ENCODE measurements at regions of chr1 and their contacts with region 1.

Region 1: DNA sequence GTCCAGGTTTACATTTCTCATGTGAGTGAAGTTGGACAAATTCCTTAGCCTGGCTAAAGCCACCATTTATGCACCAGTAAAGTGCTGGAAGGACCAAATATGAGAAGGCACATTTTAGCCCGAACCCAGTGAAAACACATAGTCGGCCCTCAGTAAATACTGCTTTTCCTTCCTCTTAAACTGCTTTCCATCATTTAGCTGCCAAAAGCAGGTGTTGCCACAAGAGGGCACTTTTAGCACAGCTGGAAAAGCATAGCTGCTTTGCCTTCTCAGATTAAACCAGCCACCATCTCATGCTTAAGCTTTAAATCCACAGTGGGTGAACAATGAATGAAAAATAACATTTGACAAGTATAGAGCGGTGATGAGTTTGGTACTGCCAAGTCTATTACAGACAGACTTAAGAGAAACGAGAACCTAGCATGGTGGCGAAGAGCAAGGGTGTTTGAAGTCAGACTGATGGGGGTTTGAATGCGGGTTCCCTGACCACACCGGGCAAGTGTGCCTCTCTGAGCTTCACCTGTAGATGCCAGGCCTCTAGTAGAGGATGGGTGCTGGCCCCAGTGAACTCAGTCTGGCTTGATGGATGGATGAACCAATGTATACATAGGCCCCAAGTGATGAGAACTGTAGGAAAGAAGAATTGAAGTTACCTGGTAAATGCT is 57.8 kb downstream of the SLC35D1 start:
- DNase-seq: peak; percentile 19 to 58
- H3K4me3 ChIP-seq: no peak overlapping the region
- H3K27ac ChIP-seq: no peak overlapping the region
- H3K4me1 ChIP-seq: no peaks in the 10 kb centered on the region
- H3K27me3 ChIP-seq: no peaks in the 10 kb centered on the region
- CTCF ChIP-seq: peak in 2 of 3 experiments; percentile 83 to 86; a peak in 3 of 4 replicates
- EP300 ChIP-seq: no peak
- POLR2A ChIP-seq: no peak
- RAD21 ChIP-seq: peak; percentile 96 to 97

Region 2: GRCh38 chr1:66764994-66765578 is 231.1 kb before region 1 on chr1:
- CTCF ChIA-PET with region 1: interaction called, 16 read pairs
- POLR2A ChIA-PET with region 1: no interaction called
- DNase-seq: peak in 1 of 2 experiments; percentile 49
- H3K4me3 ChIP-seq: no peak overlapping the region
- H3K27ac ChIP-seq: no peak overlapping the region
- H3K4me1 ChIP-seq: no peaks in the 10 kb centered on the region
- H3K27me3 ChIP-seq: no peaks in the 10 kb centered on the region
- CTCF ChIP-seq: peak in 1 of 3 experiments; percentile 63; a peak in 2 of 4 replicates
- EP300 ChIP-seq: no peak
- POLR2A ChIP-seq: no peak
- RAD21 ChIP-seq: peak; percentile 75 to 79

Region 3: GRCh38 chr1:66788231-66788939 is 207.8 kb before region 1 on chr1:
- CTCF ChIA-PET with region 1: no interaction called
- POLR2A ChIA-PET with region 1: no interaction called
- DNase-seq: no peak
- H3K4me3 ChIP-seq: no peak overlapping the region
- H3K27ac ChIP-seq: no peak overlapping the region
- H3K4me1 ChIP-seq: no peaks in the 10 kb centered on the region
- H3K27me3 ChIP-seq: no peaks in the 10 kb centered on the region
- CTCF ChIP-seq: no peak
- EP300 ChIP-seq: no peak
- POLR2A ChIP-seq: no peak
- RAD21 ChIP-seq: no peak

Region 4: DNA sequence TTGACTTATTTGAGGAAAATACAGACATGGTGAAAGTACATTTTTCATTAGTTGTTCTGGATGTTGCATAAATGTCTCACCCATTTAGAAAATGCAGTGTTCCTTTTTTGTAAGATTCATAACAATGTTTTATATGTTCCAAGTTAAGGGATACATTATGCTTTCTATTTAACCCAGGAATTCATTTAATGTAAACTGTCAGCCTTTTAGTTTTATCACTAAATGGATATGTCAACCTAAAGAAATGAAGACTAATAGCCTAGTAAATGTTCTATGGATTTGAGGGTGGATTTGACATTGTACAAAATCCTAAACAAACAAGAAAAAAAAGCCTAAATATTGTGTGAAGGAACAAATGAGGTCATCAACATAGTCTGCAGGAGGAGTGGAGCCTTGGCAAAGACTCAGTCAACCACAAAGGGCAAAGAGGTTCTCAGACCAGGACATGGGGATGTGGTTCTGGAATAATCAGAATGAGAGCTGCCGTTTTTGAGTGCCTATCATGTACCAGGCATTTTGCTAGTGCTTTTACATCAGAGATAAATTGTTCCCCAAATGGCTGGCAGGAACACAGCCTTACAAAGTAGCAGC is 186.3 kb before region 1 on chr1:
- CTCF ChIA-PET with region 1: no interaction called
- POLR2A ChIA-PET with region 1: no interaction called
- DNase-seq: no peak
- H3K4me3 ChIP-seq: no peak overlapping the region
- H3K27ac ChIP-seq: no peak overlapping the region
- H3K4me1 ChIP-seq: no peaks in the 10 kb centered on the region
- H3K27me3 ChIP-seq: no peaks in the 10 kb centered on the region
- CTCF ChIP-seq: no peak
- EP300 ChIP-seq: no peak
- POLR2A ChIP-seq: no peak
- RAD21 ChIP-seq: no peak

Region 5: DNA sequence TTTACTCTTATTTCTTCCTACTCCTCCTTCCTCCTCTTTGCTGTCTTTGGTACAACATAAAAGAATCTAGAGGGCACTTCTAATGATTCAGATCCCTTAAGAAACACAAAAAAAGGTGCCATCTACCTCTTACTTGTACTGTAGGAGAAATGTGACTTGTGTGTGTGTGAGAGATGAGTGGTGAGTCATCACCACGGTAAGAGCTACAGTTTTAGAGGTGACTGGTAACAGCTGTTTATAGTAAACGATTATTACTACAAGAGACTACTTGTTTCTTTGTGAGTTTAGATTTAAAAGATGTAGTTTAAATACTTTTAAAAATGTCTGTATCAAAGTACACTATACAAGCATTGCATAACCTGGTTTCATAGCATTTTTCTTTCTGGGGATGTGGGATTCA is 17.4 kb after region 1 on chr1:
- CTCF ChIA-PET with region 1: interaction called, 18 read pairs
- POLR2A ChIA-PET with region 1: no interaction called
- DNase-seq: no peak
- H3K4me3 ChIP-seq: no peak overlapping the region
- H3K27ac ChIP-seq: no peak overlapping the region
- H3K4me1 ChIP-seq: peaks cover 0 to 1% (median under 1%) of the 10 kb centered on the region in 4 experiments; a peak in 2 of 7 replicates
- H3K27me3 ChIP-seq: 0 out of 7 replicates have a peak, but pooled peaks cover 0 to under 1% (median 0%) of the 10 kb centered on the region in 4 experiments
- CTCF ChIP-seq: no peak
- EP300 ChIP-seq: no peak
- POLR2A ChIP-seq: no peak
- RAD21 ChIP-seq: no peak

Region 6: DNA sequence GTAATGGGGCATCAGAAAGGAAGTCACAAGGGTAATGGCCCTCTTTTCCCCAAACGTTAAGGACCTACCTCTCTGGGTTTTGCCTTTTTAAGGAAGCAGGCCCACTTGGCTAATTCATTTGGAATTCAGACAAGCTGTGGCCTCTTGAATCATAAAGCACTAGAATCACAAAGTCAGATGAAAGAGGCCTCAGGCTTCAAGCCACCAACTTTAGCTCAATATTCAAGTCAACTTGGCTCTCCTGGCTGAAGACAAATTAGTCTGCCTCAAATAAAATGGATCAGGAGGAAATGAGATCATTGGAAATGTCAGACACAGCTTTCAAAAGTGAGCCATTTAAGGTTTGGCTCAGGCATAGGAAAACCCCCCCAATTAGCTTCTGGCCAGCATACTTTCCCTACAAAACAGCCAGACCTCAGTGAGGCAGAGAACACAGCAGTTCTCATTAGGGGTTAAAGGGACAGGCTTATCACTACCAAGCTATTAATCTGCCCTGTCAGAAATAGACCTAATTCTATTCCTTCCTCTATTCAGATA is 23.5 kb after region 1 on chr1:
- CTCF ChIA-PET with region 1: interaction called, 18 read pairs
- POLR2A ChIA-PET with region 1: interaction called, 3 read pairs
- DNase-seq: no peak
- H3K4me3 ChIP-seq: no peak overlapping the region
- H3K27ac ChIP-seq: no peak overlapping the region
- H3K4me1 ChIP-seq: peaks cover 0 to 12% (median 9%) of the 10 kb centered on the region in 4 experiments; a peak in 4 of 7 replicates
- H3K27me3 ChIP-seq: 0 out of 7 replicates have a peak, but pooled peaks cover 0 to 2% (median 0%) of the 10 kb centered on the region in 4 experiments
- CTCF ChIP-seq: no peak
- EP300 ChIP-seq: no peak
- POLR2A ChIP-seq: no peak
- RAD21 ChIP-seq: no peak

Region 7: DNA sequence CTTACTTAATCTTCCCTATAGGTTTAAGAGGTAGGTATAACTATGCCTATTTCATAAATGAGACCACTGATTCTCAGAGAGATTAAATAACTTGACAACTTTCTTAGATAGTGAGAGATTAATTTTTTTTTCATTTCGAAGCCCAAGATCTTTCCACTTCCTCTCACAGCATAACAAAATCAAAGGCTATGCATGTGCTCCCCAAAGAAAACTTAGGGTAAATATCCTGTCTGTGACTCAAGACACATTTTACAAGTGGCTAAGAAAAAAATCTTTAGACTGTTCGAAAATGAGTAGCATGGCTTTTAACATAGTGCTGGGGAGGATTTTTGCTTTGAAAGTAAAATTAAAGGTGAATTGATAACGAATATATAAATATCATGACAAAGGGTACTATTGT is 146.8 kb after region 1 on chr1:
- CTCF ChIA-PET with region 1: interaction called, 133 read pairs
- POLR2A ChIA-PET with region 1: no interaction called
- DNase-seq: no peak
- H3K4me3 ChIP-seq: no peak overlapping the region
- H3K27ac ChIP-seq: no peak overlapping the region
- H3K4me1 ChIP-seq: no peaks in the 10 kb centered on the region
- H3K27me3 ChIP-seq: no peaks in the 10 kb centered on the region
- CTCF ChIP-seq: no peak
- EP300 ChIP-seq: no peak
- POLR2A ChIP-seq: no peak
- RAD21 ChIP-seq: no peak

Measured in H1 (cell line).